Colonic mucosa (tissue), 4 donors: ENCODE measurements at regions of chr10 and their contacts with region 1.

Region 1: DNA sequence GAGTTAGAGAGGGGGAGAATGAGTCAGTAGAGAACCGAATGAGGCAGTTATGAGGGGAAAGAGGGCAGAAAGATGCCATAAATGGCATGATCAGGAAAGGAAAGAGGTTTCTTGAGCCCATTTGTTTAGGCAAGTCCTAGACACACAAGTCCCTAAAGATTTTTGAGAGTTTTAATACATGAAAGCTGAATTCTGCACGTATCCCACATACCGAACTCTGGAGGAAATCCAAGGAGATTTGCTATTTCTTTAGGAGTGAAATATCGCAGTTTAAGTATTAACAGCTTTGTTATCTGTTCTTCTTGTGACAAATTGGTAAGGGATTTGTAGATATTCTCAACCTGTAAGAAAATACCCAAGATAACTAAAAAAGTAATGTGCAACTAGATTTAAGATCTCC is 23.7 kb upstream of the CUBN start:
- DNase-seq: no peak
- H3K4me3 ChIP-seq: no peak overlapping the region
- H3K27ac ChIP-seq: no peak overlapping the region
- H3K4me1 ChIP-seq: no peaks in the 10 kb centered on the region
- H3K27me3 ChIP-seq: no peaks in the 10 kb centered on the region
- CTCF ChIP-seq: no peak

Region 2: DNA sequence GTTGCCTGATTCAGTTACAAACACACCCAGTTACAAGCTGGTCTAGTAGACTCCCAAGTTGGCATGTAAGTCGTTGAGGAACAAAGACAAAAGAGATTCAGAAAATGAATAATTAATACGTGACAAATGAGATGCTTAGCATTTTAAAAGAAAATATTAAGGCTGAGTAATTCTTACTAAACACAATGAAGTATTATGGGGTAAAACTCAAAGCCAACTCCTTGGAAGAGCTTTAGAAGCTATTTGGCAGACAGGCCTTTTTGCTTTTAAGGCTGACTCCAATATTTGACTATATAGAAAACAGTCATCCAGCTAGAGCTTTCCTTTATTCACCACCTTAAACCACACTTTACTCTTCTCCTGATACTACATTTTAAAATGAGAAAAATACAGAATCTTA is 42.7 kb after region 1 on chr10:
- intact Hi-C with region 1: no loop called
- DNase-seq: no peak
- H3K4me3 ChIP-seq: no peak overlapping the region
- H3K27ac ChIP-seq: no peak overlapping the region
- H3K4me1 ChIP-seq: no peaks in the 10 kb centered on the region
- H3K27me3 ChIP-seq: no peaks in the 10 kb centered on the region
- CTCF ChIP-seq: no peak

Region 3: DNA sequence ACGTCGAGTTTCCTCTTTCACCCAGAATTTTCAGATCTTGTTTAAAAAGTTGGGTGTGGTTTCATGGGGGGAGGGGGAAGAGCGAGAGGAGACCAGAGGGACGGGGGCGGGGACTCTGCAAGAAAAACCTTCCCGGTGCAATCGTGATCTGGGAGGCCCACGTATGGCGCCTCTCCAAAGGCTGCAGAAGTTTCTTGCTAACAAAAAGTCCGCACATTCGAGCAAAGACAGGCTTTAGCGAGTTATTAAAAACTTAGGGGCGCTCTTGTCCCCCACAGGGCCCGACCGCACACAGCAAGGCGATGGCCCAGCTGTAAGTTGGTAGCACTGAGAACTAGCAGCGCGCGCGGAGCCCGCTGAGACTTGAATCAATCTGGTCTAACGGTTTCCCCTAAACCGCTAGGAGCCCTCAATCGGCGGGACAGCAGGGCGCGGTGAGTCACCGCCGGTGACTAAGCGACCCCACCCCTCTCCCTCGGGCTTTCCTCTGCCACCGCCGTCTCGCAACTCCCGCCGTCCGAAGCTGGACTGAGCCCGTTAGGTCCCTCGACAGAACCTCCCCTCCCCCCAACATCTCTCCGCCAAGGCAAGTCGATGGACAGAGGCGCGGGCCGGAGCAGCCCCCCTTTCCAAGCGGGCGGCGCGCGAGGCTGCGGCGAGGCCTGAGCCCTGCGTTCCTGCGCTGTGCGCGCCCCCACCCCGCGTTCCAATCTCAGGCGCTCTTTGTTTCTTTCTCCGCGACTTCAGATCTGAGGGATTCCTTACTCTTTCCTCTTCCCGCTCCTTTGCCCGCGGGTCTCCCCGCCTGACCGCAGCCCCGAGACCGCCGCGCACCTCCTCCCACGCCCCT is 75.0 kb after region 1 on chr10 and contains the start of gene VIM:
- intact Hi-C with region 1: loop called (anchors 10 kb)
- DNase-seq: peak; percentile 81
- H3K4me3 ChIP-seq: peak within 1 kb of the TSS; percentile 69
- H3K27ac ChIP-seq: peak within 1 kb of the TSS; percentile 94
- H3K4me1 ChIP-seq: no peaks in the 10 kb centered on the region
- H3K27me3 ChIP-seq: peaks cover 10% of the 10 kb centered on the region
- CTCF ChIP-seq: no peak
- total RNA-seq, gene VIM: 121 to 326 TPM